ENCODE measurements at regions of chr17 and their contacts with region 1.

Region 1: DNA sequence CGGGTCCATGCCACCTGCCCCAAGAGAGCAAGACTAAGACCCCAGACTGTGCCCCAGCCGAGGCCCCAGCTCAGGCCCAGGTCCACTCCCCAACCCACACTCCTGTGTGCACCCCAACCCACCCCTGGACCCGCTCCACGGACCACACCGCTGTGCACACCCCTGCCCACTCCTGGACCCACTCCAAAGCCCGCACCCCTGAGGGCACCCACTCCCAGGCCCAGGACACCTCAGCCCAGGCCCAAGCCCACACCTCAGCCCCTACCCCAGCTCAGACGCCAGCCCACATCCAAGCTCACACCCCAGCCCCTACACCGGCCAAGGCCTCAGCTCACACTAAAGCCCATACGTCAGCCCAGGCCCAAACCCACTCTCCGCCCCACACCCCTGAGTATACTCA is 1.1 kb downstream of the SPEM3 start:
- DNase-seq: no peak
- H3K4me3 ChIP-seq: no peak overlapping the region
- H3K27ac ChIP-seq: no peak overlapping the region
- H3K4me1 ChIP-seq: no peaks in the 10 kb centered on the region
- H3K27me3 ChIP-seq: no peaks in the 10 kb centered on the region
- CTCF ChIP-seq: no peak

Region 2: DNA sequence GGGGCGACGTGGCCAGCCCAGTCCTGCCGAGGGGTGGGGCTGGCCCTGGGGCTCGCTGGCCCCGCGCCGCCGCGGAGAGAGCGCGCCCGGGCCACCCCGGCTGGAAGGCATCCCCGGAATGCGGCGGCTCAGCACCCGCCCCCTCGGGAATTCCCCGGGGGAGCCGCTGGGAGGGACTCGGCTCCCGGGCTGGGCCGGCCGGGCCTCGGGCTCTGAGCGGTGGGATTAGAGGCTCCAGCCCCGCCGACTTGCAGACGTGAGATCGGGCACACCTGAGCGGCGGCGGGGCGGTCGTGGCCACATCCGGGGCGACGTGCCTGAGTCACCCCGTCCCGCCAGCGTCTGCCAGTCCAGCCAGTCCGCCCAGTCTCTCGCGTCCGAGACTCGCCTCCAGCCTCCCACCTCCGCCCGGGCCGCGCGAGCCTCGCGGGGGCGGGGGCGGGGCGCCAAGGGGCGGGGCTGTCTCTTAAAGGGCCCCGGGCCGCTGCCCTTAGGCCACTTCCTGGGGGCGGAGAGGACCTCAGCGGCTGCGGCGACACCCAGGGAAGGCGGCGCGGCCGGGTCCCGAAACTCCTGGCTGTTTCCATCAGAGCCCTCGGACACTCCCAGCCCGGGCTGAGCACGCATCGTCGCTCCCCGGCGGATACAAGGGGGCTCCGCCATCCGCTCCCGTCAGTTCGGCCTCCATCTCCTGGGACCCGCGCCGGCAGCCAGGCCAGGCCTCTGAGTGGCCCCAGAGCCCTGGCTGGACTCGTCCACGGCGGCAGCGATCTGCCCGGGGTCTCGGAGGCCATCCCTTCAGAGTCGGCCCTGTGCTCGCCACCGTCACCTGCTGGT is 77.8 kb before region 1 on chr17 and contains the start of gene KCTD11:
- CTCF ChIA-PET with region 1: no interaction called
- dilution Hi-C with region 1: no loop called
- in situ Hi-C with region 1: no loop called
- intact Hi-C with region 1: no loop called
- DNase-seq: peak; percentile 99
- H3K4me3 ChIP-seq: peak within 1 kb of the TSS; percentile 60 to 88 (median 77)
- H3K27ac ChIP-seq: peak within 1 kb of the TSS; percentile 99
- H3K4me1 ChIP-seq: peaks cover 46% of the 10 kb centered on the region
- H3K27me3 ChIP-seq: no peaks in the 10 kb centered on the region
- CTCF ChIP-seq: peak in 1 of 2 donors; percentile 30
- total RNA-seq, gene KCTD11: 13.2 to 43.9 TPM

Region 3: DNA sequence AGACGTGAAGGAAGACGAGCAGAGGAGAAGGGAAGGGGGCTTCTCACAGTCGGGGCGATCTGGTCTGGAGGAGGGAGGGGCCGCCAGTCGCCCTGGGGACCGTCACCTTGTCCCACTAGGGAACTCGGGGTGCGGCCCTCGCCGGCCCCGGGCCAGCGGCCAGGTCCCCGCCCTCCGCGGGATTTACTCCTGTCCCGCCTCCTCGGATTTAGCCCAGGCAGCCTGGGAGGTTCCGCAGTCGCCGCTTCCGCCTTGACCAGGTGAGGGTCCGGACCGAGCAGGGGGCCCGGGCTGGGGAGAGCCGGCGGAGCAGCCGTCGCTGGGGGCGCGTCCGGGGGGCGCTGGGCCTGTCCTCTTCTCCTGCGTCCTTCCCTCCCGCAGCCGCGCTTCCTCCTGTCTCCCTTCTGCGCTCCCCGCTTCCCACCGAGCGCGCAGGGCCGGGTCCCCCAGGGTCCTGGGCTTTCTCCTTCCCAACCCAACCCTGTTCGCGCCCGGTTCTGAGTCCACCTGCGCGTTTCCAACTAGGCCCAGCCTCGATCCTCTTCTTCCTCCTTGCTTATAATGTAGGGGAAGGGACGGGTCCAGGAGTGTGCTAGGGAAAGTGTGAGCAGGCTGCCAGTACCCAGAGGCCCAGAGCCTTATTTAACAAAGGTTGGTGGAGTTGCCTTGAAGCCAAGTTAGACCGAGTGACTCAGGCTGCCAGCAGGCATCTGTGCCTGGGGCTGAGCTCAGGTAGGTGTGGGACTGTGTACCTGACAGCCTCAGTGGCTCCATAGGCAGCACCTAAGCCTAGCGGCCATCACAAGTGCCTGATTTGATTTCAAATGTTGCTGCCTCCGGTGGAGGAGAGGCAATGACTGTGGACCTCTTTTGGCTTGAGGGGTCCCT is 48.6 kb before region 1 on chr17 and contains the start of gene TNK1:
- CTCF ChIA-PET with region 1: no interaction called
- dilution Hi-C with region 1: loop called (anchors 5 kb)
- in situ Hi-C with region 1: no loop called
- intact Hi-C with region 1: no loop called
- DNase-seq: peak; percentile 66
- H3K4me3 ChIP-seq: peak within 1 kb of the TSS; percentile 57 to 60 (median 57)
- H3K27ac ChIP-seq: peak within 1 kb of the TSS; percentile 50
- H3K4me1 ChIP-seq: peaks cover 7% of the 10 kb centered on the region
- H3K27me3 ChIP-seq: no peaks in the 10 kb centered on the region
- CTCF ChIP-seq: no peak
- total RNA-seq, gene TNK1: 13.3 to 15.9 TPM

Region 4: DNA sequence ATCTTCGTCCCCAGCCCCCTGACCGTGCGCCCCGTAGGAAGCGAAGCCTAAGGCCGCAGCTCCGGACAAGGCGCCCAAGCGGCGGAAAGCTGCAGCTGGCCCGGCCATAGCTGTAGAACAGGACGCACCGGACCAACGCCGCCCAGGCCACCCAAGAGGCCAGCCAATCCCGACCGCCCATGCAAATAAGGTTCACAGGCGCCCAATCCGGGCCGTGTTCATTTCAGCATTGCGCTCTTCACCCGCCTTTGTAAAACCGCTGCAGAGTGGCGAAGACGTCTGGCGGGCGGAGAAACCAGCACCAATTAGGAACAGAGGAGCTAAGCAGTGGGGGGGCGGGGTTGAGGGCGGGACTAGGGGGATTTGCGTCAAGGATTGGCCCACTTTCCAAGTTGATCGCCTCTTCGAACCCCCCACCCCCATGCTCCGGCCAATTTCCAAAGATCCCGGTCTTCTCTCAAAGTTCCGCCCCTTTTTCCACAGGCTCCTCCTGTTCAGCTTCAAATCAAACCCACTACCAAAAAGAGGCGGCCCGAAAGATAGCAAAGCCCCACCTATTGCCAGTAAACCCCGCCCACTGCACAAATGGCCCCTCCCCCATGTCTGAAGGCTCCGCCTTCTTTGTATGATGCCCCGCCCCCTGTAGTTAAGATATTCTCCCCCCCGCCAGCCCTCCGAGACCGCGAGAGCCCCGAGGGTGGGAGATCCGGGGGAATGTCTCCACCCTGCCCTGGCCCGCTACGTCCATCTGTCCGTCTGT is 25.6 kb before region 1 on chr17 and contains the start of gene TMEM256:
- CTCF ChIA-PET with region 1: interaction called, 11 read pairs
- dilution Hi-C with region 1: no loop called
- in situ Hi-C with region 1: no loop called
- intact Hi-C with region 1: loop called (anchors 2 kb)
- DNase-seq: peak; percentile 99
- H3K4me3 ChIP-seq: peak within 1 kb of the TSS; percentile 66 to 86 (median 70)
- H3K27ac ChIP-seq: peak within 1 kb of the TSS; percentile 42
- H3K4me1 ChIP-seq: peaks cover 7% of the 10 kb centered on the region
- H3K27me3 ChIP-seq: no peaks in the 10 kb centered on the region
- CTCF ChIP-seq: no peak
- total RNA-seq, gene TMEM256: 43.8 to 70.8 TPM

Region 5: GRCh38 chr17:7528842-7529241 is 99.1 kb after region 1 on chr17:
- CTCF ChIA-PET with region 1: no interaction called
- dilution Hi-C with region 1: loop called (anchors 5 kb)
- in situ Hi-C with region 1: no loop called
- intact Hi-C with region 1: no loop called
- DNase-seq: no peak
- H3K4me3 ChIP-seq: no peak overlapping the region
- H3K27ac ChIP-seq: no peak overlapping the region
- H3K4me1 ChIP-seq: no peaks in the 10 kb centered on the region
- H3K27me3 ChIP-seq: no peaks in the 10 kb centered on the region
- CTCF ChIP-seq: no peak